ENCODE measurements at regions of chr12 and their contacts with region 1.

Region 1: GRCh38 chr12:26701604-26702215 is 131.3 kb downstream of the ITPR2 start:
- DNase-seq: no peak
- ATAC-seq: no peak
- H3K4me3 ChIP-seq: no peak overlapping the region
- H3K27ac ChIP-seq: no peak overlapping the region
- H3K4me1 ChIP-seq: peaks cover 0 to 24% (median 18%) of the 10 kb centered on the region in 9 donors
- H3K27me3 ChIP-seq: no peaks in the 10 kb centered on the region
- CTCF ChIP-seq: peak; percentile 35 to 80 (median 66)

Region 2: GRCh38 chr12:26113853-26114719 is 587.6 kb before region 1 on chr12:
- intact Hi-C with region 1: loop called in 1 of 10 experiments (anchors 10 kb)
- DNase-seq: peak; percentile 94 to 96
- ATAC-seq: peak; percentile 90 to 98 (median 93)
- H3K4me3 ChIP-seq: peak overlapping the region; percentile 0 to 59 (median 52)
- H3K27ac ChIP-seq: peak overlapping the region; percentile 79 to 96 (median 93)
- H3K4me1 ChIP-seq: peaks cover 3 to 54% (median 25%) of the 10 kb centered on the region in 9 donors
- H3K27me3 ChIP-seq: peaks cover 0 to 9% (median 0%) of the 10 kb centered on the region in 7 donors
- CTCF ChIP-seq: peak in 6 of 9 donors; percentile 5 to 42 (median 28)

Region 3: DNA sequence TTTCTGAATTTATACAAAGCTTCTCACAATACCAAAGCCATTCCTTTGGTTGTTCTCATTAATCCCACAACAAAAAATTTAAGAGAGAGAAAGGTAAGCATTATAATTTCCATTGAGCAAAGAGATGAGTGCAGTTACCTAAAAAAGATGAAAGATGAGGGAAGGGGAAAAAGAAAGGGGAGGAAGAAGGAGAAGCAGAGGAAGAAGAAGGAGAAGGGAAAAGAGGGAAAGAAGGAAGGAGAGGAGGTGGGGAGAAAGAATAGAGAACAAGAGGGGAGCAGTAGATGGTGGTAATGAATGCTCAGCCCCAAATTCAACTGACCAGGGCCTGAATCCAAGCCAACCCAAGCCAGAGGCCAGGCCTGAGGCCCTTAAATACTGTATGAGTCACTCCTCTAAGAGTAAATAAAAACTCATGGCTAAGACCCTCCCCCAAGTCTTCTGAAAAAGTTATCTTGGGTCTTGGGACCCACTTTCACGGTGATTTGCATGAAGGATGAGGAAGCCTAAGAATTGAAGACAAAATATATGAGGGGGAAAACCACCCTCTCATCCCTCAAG is 13.3 kb before region 1 on chr12:
- intact Hi-C with region 1: loop called in 1 of 10 experiments (anchors 1 kb)
- DNase-seq: no peak
- ATAC-seq: no peak
- H3K4me3 ChIP-seq: no peak overlapping the region
- H3K27ac ChIP-seq: no peak overlapping the region
- H3K4me1 ChIP-seq: no peaks in the 10 kb centered on the region
- H3K27me3 ChIP-seq: no peaks in the 10 kb centered on the region
- CTCF ChIP-seq: no peak

Region 4: DNA sequence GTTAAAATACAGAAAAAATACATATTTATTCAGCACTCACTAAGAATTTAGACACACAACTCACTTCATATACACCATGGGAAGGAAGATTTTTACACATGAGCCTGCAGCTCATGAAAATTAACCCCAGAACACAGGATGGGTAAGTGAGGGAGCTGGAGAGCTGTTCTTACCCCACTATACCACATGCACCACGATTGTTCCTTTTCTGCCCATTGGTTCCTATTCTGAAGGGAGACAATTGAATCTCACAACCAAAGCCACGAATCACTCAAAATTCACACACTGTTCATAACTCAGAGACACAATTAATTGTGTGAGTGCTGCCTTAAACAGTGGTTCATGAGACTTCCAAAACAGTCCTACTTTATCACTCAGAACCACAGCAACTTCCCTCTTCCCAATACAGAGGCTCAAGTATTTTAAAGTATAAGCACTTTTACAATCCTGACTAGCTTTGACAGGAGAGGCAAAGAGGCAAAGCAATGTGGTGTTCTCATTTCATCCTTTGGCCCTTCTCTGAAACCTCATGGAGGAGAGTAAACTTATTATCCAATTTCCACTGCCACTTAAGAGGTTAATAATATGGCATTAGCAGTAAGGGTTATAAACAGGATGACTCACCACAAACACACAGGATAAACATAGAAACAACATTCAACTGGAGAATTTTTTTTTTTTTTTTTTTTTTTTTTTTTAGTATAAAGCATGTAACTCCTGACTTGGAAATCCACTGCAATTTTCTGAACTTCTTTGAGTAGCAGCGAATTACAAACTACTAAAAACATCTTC is 71.8 kb after region 1 on chr12:
- intact Hi-C with region 1: no loop called
- DNase-seq: no peak
- ATAC-seq: no peak
- H3K4me3 ChIP-seq: no peak overlapping the region
- H3K27ac ChIP-seq: no peak overlapping the region
- H3K4me1 ChIP-seq: peaks cover 0 to 28% (median 6%) of the 10 kb centered on the region in 9 donors
- H3K27me3 ChIP-seq: no peaks in the 10 kb centered on the region
- CTCF ChIP-seq: no peak

Region 5: DNA sequence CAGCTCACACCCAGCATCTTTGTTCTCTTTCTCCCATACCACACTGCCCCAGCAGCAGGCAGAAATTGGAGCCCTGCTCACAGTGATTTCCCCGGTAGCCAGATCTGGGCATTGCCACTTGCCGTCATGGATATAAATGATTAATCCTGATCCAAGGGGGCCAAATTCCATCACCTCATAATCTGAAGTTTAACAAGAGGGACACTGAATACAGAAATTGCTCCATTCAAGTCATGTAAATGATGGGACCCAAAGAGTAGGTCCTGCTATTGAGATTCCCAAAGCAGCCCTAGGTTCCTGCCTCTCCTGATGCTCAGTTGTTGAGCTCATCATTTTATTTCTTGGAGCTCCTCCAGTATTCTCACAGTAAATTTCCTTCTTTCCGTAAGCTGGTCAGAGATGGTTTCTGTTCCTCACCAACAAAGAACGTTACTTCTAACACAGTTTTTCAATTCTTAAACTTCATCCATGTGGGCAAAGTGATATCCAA is 119.5 kb after region 1 on chr12:
- intact Hi-C with region 1: loop called in 1 of 10 experiments (anchors 10 kb)
- DNase-seq: no peak
- ATAC-seq: peak in 5 of 8 donors; percentile 41 to 72 (median 56)
- H3K4me3 ChIP-seq: no peak overlapping the region
- H3K27ac ChIP-seq: peak overlapping the region in 2 of 10 donors; percentile 4 to 13
- H3K4me1 ChIP-seq: peaks cover 0 to 19% (median 0%) of the 10 kb centered on the region in 9 donors
- H3K27me3 ChIP-seq: no peaks in the 10 kb centered on the region
- CTCF ChIP-seq: no peak

Measured in heart right ventricle (tissue), 16 donors.